Caco-2 (cell line): ENCODE measurements at regions of chr13 and their contacts with region 1.

Region 1: GRCh38 chr13:26985285-26985878 is 186.2 kb downstream of the USP12 start:
- DNase-seq: peak; percentile 80 to 83
- H3K4me3 ChIP-seq: no peak overlapping the region
- H3K4me3 Mint-ChIP-seq: no peak overlapping the region
- H3K27ac Mint-ChIP-seq: peak overlapping the region; percentile 30
- H3K4me1 ChIP-seq: peaks cover 49% of the 10 kb centered on the region
- H3K4me1 Mint-ChIP-seq: peaks cover 62% of the 10 kb centered on the region
- H3K27me3 ChIP-seq: no peaks in the 10 kb centered on the region
- H3K27me3 Mint-ChIP-seq: no peaks in the 10 kb centered on the region
- CTCF ChIP-seq: peak; percentile 65 to 92

Region 2: DNA sequence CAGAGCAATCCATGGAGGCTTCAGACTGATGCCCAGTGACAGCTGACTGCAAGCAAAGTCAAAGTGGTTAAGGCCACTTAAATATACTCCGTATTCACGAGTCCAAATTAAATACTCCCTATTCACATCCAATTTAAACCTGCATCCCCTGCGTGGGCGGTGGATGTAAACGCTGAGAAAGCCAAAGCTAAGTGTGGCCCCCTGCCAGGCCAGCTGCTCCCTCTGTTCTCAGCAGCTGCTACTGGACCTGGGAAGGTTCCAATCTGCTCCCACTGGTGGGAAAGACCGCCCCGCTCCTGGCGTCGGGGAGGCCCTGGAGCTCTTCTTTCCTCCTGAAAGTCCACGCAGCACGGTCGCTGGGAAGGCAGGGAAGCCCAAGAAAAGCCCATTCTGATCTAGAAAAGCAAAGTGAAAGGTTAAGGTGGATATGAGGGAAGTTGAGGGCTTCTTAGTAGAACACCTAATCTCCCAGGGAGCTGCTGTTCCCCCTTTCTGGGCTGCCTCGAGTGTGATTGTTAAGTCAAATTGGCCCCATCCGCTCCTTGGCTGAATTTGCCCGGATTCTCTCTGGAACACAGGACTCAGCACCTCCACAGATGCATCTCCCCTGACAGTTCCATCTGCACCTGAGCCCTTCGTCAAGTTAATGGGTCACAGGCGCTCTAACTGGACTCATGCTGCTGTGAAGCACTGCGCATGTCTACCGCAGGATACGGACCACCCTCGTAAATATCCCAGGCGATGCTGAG is 19.3 kb before region 1 on chr13:
- CTCF ChIA-PET with region 1: interaction called, 16 read pairs
- POLR2A ChIA-PET with region 1: interaction called, 9 read pairs
- intact Hi-C with region 1: loop called (anchors 1 kb)
- DNase-seq: no peak
- H3K4me3 ChIP-seq: no peak overlapping the region
- H3K4me3 Mint-ChIP-seq: no peak overlapping the region
- H3K27ac Mint-ChIP-seq: peak overlapping the region; percentile 92
- H3K4me1 ChIP-seq: peaks cover 84% of the 10 kb centered on the region
- H3K4me1 Mint-ChIP-seq: peaks cover 78% of the 10 kb centered on the region
- H3K27me3 ChIP-seq: no peaks in the 10 kb centered on the region
- H3K27me3 Mint-ChIP-seq: no peaks in the 10 kb centered on the region
- CTCF ChIP-seq: no peak

Region 3: GRCh38 chr13:27022571-27023311 is 37.4 kb after region 1 on chr13:
- CTCF ChIA-PET with region 1: interaction called, 10 read pairs
- POLR2A ChIA-PET with region 1: no interaction called
- intact Hi-C with region 1: no loop called
- DNase-seq: peak in 1 of 2 experiments; percentile 40
- H3K4me3 ChIP-seq: no peak overlapping the region
- H3K4me3 Mint-ChIP-seq: no peak overlapping the region
- H3K27ac Mint-ChIP-seq: peak overlapping the region; percentile 30
- H3K4me1 ChIP-seq: peaks cover 10% of the 10 kb centered on the region
- H3K4me1 Mint-ChIP-seq: no peaks in the 10 kb centered on the region
- H3K27me3 ChIP-seq: no peaks in the 10 kb centered on the region
- H3K27me3 Mint-ChIP-seq: no peaks in the 10 kb centered on the region
- CTCF ChIP-seq: no peak

Region 4: GRCh38 chr13:27079421-27079958 is 94.1 kb after region 1 on chr13:
- CTCF ChIA-PET with region 1: no interaction called
- POLR2A ChIA-PET with region 1: no interaction called
- intact Hi-C with region 1: no loop called
- DNase-seq: peak in 1 of 2 experiments; percentile 56
- H3K4me3 ChIP-seq: no peak overlapping the region
- H3K4me3 Mint-ChIP-seq: no peak overlapping the region
- H3K27ac Mint-ChIP-seq: peak overlapping the region; percentile 26
- H3K4me1 ChIP-seq: no peaks in the 10 kb centered on the region
- H3K4me1 Mint-ChIP-seq: peaks cover 12% of the 10 kb centered on the region
- H3K27me3 ChIP-seq: no peaks in the 10 kb centered on the region
- H3K27me3 Mint-ChIP-seq: no peaks in the 10 kb centered on the region
- CTCF ChIP-seq: no peak

Region 5: DNA sequence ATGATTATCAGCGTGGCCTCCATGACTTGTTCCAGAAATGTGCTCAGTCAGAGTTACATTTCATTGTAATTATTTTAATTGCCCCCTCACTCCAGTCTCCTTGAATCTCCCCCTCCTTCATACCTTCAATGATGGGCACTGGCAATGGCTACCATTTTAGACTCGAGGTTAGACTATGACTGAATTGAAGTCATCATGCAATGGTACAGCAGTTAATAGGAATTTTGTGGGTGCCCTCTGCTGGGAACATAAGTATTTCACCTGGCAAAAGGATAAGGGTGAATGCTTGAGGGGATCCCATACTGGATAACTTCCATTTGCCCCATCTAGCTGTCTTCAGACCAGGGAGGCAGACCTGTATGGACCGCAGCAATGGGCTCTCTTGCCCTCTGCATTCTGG is 218.5 kb after region 1 on chr13:
- CTCF ChIA-PET with region 1: interaction called, 4 read pairs
- POLR2A ChIA-PET with region 1: no interaction called
- intact Hi-C with region 1: loop called (anchors 1 kb)
- DNase-seq: no peak
- H3K4me3 ChIP-seq: no peak overlapping the region
- H3K4me3 Mint-ChIP-seq: no peak overlapping the region
- H3K27ac Mint-ChIP-seq: no peak overlapping the region
- H3K4me1 ChIP-seq: peaks cover 5% of the 10 kb centered on the region
- H3K4me1 Mint-ChIP-seq: peaks cover 9% of the 10 kb centered on the region
- H3K27me3 ChIP-seq: no peaks in the 10 kb centered on the region
- H3K27me3 Mint-ChIP-seq: peaks cover 7% of the 10 kb centered on the region
- CTCF ChIP-seq: peak in 1 of 2 experiments; percentile 14

Region 6: GRCh38 chr13:27374650-27375049 is 389.3 kb after region 1 on chr13:
- CTCF ChIA-PET with region 1: interaction called, 10 read pairs
- POLR2A ChIA-PET with region 1: no interaction called
- intact Hi-C with region 1: no loop called
- DNase-seq: peak; percentile 75 to 82
- H3K4me3 ChIP-seq: no peak overlapping the region
- H3K4me3 Mint-ChIP-seq: no peak overlapping the region
- H3K27ac Mint-ChIP-seq: no peak overlapping the region
- H3K4me1 ChIP-seq: peaks cover 11% of the 10 kb centered on the region; the same call in 1 of the 2 replicates
- H3K4me1 Mint-ChIP-seq: peaks cover 23% of the 10 kb centered on the region
- H3K27me3 ChIP-seq: no peaks in the 10 kb centered on the region
- H3K27me3 Mint-ChIP-seq: no peaks in the 10 kb centered on the region
- CTCF ChIP-seq: peak; percentile 61 to 90